ENCODE measurements at regions of chr13 and their contacts with region 1.

Region 1: DNA sequence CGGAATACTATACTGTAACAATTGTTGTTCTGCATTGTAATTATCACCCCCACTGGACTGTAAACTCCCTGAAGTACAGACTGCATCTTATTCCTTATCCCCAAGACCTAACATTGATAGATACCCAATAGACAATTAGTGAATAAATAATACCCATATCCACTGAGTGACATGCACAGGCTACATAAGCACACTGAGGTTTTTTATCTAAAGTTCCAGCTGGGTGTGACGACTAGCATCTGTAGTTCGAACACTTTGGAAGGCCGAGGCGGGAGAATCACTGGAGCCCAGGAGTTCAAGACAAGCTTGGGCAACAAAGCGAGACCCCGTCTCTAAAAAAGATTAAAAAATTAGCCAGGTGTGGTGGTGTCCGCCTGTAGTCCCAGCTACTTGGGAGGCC is 2.5 kb downstream of the KPNA3 start:
- DNase-seq: no peak

Region 2: DNA sequence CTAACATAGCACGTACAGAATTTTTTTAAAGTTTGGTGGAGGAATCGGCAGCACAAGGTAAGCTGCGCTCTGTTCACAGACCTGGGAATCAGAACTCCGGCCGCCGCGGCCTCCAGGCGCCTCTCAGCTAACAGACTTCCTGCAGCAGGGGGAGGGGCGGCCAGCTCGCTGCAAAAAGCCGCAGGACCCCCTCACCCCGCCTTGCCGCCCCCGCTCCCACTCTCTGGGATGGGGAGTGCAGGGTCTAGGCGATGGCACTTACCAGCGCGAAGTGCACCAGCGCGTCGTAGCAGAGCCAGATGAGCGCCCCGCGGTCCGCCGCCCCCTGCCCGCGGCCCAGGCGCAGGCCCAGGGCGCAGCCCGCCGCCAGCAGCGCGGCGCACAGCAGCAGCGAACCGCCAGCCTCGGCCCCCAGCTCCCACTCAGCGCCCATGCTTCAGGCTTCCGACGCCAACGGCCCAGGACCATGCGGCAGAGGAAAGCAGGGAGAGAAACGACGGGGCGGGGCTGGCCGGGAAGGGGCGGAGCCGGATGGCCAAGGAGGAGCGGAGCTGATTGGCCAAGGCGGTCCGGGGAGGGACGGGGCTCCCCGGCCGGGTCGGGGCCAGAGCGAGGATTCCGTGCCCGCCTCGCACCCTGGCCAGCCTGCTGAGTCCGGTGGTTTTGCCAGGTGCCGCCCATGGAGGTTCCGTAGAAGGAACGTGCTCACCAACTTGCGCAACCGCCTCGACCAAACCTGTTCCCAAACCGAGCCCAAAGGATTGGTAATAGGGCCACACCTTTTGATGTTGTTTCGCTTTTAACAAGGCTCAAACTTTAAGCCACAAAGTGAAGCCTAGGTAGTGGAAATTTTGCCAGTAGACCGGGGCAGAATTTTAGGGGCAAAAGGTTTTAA is 98.7 kb before region 1 on chr13 and contains the start of gene EBPL:
- intact Hi-C with region 1: loop called in 1 of 2 experiments (anchors 2 kb)
- DNase-seq: peak; percentile 97
- total RNA-seq, gene EBPL: 20.1 to 23.8 TPM

Region 3: GRCh38 chr13:49810567-49811526 is 20.9 kb after region 1 on chr13:
- intact Hi-C with region 1: no loop called
- DNase-seq: no peak

Measured in posterior vena cava (tissue), 2 donors.